B cell (primary cell): ENCODE measurements at regions of chr1 and their contacts with region 1.

Region 1: GRCh38 chr1:89762779-89763648 is 57.8 kb upstream of the LRRC8D start:
- DNase-seq: peak; percentile 90
- ATAC-seq: peak; percentile 99
- H3K4me3 ChIP-seq: peak overlapping the region; percentile 40 to 62 (median 59)
- H3K4me3 Mint-ChIP-seq: peak overlapping the region; percentile 87
- H3K27ac ChIP-seq: no peak overlapping the region
- H3K27ac Mint-ChIP-seq: peak overlapping the region; percentile 34
- H3K4me1 ChIP-seq: peaks cover 9 to 20% of the 10 kb centered on the region in 2 donors
- H3K4me1 Mint-ChIP-seq: peaks cover 25% of the 10 kb centered on the region
- H3K27me3 ChIP-seq: peaks cover 0 to 9% (median 0%) of the 10 kb centered on the region in 4 experiments
- H3K27me3 Mint-ChIP-seq: peaks cover 8% of the 10 kb centered on the region
- CTCF ChIP-seq: peak; percentile 98

Region 2: GRCh38 chr1:88998716-88999115 is 764.3 kb before region 1 on chr1:
- CTCF ChIA-PET with region 1: no interaction called
- POLR2A ChIA-PET with region 1: no interaction called
- intact Hi-C with region 1: loop called (anchors 5 kb)
- DNase-seq: peak; percentile 82
- ATAC-seq: peak; percentile 93
- H3K4me3 ChIP-seq: no peak overlapping the region
- H3K4me3 Mint-ChIP-seq: no peak overlapping the region
- H3K27ac ChIP-seq: no peak overlapping the region
- H3K27ac Mint-ChIP-seq: no peak overlapping the region
- H3K4me1 ChIP-seq: peaks cover 2 to 3% of the 10 kb centered on the region in 2 donors
- H3K4me1 Mint-ChIP-seq: peaks cover 2% of the 10 kb centered on the region
- H3K27me3 ChIP-seq: no peaks in the 10 kb centered on the region
- H3K27me3 Mint-ChIP-seq: no peaks in the 10 kb centered on the region
- CTCF ChIP-seq: peak; percentile 75

Region 3: GRCh38 chr1:89524369-89525168 is 238.4 kb before region 1 on chr1 and contains the start of gene LRRC8B:
- CTCF ChIA-PET with region 1: interaction called, 51 read pairs
- POLR2A ChIA-PET with region 1: no interaction called
- intact Hi-C with region 1: loop called (anchors 1 kb)
- DNase-seq: peak; percentile 94
- ATAC-seq: peak; percentile 81
- H3K4me3 ChIP-seq: peak within 1 kb of the TSS; percentile 58 to 99 (median 88)
- H3K4me3 Mint-ChIP-seq: peak within 1 kb of the TSS; percentile 98
- H3K27ac ChIP-seq: peak within 1 kb of the TSS; percentile 97 to 98
- H3K27ac Mint-ChIP-seq: peak within 1 kb of the TSS; percentile 97
- H3K4me1 ChIP-seq: peaks cover 13 to 23% of the 10 kb centered on the region in 2 donors
- H3K4me1 Mint-ChIP-seq: peaks cover 26% of the 10 kb centered on the region
- H3K27me3 ChIP-seq: no peaks in the 10 kb centered on the region
- H3K27me3 Mint-ChIP-seq: no peaks in the 10 kb centered on the region
- CTCF ChIP-seq: peak; percentile 6
- total RNA-seq, gene LRRC8B: 9.9 and 11.7 TPM in 2 replicates

Region 4: GRCh38 chr1:89615676-89616598 is 147.1 kb before region 1 on chr1:
- CTCF ChIA-PET with region 1: interaction called, 46 read pairs
- POLR2A ChIA-PET with region 1: no interaction called
- intact Hi-C with region 1: loop called (anchors 1 kb)
- DNase-seq: peak; percentile 52
- ATAC-seq: peak; percentile 77
- H3K4me3 ChIP-seq: no peak overlapping the region
- H3K4me3 Mint-ChIP-seq: no peak overlapping the region
- H3K27ac ChIP-seq: no peak overlapping the region
- H3K27ac Mint-ChIP-seq: no peak overlapping the region
- H3K4me1 ChIP-seq: peaks cover 10 to 11% of the 10 kb centered on the region in 2 donors
- H3K4me1 Mint-ChIP-seq: peaks cover 9% of the 10 kb centered on the region
- H3K27me3 ChIP-seq: no peaks in the 10 kb centered on the region
- H3K27me3 Mint-ChIP-seq: no peaks in the 10 kb centered on the region
- CTCF ChIP-seq: peak; percentile 51

Region 5: GRCh38 chr1:89657886-89658285 is 105.1 kb before region 1 on chr1:
- CTCF ChIA-PET with region 1: interaction called, 10 read pairs
- POLR2A ChIA-PET with region 1: interaction called, 5 read pairs
- intact Hi-C with region 1: no loop called
- DNase-seq: no peak
- ATAC-seq: no peak
- H3K4me3 ChIP-seq: no peak overlapping the region
- H3K4me3 Mint-ChIP-seq: no peak overlapping the region
- H3K27ac ChIP-seq: peak overlapping the region in 1 of 2 donors; percentile 27
- H3K27ac Mint-ChIP-seq: peak overlapping the region; percentile 29
- H3K4me1 ChIP-seq: peaks cover 26 to 27% of the 10 kb centered on the region in 2 donors
- H3K4me1 Mint-ChIP-seq: peaks cover 58% of the 10 kb centered on the region
- H3K27me3 ChIP-seq: no peaks in the 10 kb centered on the region
- H3K27me3 Mint-ChIP-seq: no peaks in the 10 kb centered on the region
- CTCF ChIP-seq: no peak

Region 6: DNA sequence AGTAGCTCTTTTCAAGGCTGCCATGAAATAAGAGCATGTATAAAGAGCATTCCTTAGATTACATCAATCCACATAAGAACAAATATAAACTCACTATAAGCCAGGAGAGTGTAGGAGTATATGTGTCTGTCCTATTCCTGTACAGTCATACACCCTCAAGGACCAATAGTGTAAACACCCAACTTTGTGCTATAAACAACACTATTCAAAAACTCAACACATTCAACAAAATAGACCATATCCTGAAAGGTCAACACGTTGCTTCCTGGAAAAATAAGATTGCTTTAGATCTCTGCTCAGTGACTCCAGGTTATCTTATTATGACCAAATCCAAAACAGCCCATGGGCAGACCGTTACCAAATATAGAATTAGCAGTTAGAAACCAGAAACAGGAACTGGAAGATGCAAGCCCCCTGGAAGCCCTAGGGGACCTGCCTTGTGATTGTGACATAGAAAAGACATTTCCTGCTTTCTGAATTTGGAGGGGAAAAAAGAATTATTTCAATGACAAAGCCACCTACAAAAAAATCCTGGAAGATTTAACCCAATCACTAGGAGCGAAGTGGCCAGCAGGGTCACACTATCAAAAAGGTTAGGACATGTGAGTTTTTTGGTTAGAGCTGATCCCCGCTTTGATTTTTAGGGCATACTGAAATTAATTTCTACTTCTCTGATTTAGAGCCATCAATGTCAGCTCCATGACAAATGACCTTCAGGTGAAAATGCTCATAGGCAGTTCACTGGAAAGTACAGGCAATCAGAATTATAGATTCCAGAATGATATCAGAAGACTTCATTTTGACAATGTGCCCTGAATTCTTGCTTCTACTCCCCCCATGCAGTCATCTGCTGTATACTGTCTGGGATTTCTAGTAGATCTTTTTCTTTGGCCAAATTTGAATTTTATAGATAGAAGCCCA is 70.2 kb before region 1 on chr1:
- CTCF ChIA-PET with region 1: interaction called, 29 read pairs
- POLR2A ChIA-PET with region 1: no interaction called
- intact Hi-C with region 1: loop called (anchors 5 kb)
- DNase-seq: peak; percentile 77
- ATAC-seq: peak; percentile 63
- H3K4me3 ChIP-seq: peak overlapping the region in 1 of 5 experiments; percentile 6
- H3K4me3 Mint-ChIP-seq: peak overlapping the region; percentile 35
- H3K27ac ChIP-seq: peak overlapping the region; percentile 68 to 93
- H3K27ac Mint-ChIP-seq: peak overlapping the region; percentile 42
- H3K4me1 ChIP-seq: peaks cover 37 to 48% of the 10 kb centered on the region in 2 donors
- H3K4me1 Mint-ChIP-seq: peaks cover 54% of the 10 kb centered on the region
- H3K27me3 ChIP-seq: no peaks in the 10 kb centered on the region
- H3K27me3 Mint-ChIP-seq: no peaks in the 10 kb centered on the region
- CTCF ChIP-seq: no peak

Region 7: DNA sequence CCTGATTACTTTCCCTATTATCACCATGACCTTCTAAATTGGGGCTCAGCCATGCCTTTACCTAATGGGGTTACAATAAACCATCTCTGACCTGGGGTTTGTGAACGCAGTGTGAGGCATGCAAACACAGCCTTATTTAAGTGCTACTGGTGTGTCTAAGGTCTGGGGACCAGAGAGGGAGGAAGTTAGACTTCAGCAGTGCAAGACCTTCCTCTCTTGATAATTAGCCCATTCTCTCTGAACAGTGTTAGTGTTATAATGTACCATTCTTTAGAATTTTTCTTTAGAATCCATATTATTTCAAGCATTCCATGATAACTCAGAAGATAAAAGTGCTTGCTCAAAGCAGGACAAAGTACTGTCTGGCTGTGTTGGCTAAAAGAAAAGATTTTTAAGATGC is 47.3 kb after region 1 on chr1:
- CTCF ChIA-PET with region 1: no interaction called
- POLR2A ChIA-PET with region 1: no interaction called
- intact Hi-C with region 1: no loop called
- DNase-seq: no peak
- ATAC-seq: no peak
- H3K4me3 ChIP-seq: no peak overlapping the region
- H3K4me3 Mint-ChIP-seq: no peak overlapping the region
- H3K27ac ChIP-seq: no peak overlapping the region
- H3K27ac Mint-ChIP-seq: no peak overlapping the region
- H3K4me1 ChIP-seq: peaks cover 5 to 7% of the 10 kb centered on the region in 2 donors
- H3K4me1 Mint-ChIP-seq: peaks cover 10% of the 10 kb centered on the region
- H3K27me3 ChIP-seq: peaks cover 0 to 3% (median 0%) of the 10 kb centered on the region in 4 experiments
- H3K27me3 Mint-ChIP-seq: no peaks in the 10 kb centered on the region
- CTCF ChIP-seq: no peak

Region 8: DNA sequence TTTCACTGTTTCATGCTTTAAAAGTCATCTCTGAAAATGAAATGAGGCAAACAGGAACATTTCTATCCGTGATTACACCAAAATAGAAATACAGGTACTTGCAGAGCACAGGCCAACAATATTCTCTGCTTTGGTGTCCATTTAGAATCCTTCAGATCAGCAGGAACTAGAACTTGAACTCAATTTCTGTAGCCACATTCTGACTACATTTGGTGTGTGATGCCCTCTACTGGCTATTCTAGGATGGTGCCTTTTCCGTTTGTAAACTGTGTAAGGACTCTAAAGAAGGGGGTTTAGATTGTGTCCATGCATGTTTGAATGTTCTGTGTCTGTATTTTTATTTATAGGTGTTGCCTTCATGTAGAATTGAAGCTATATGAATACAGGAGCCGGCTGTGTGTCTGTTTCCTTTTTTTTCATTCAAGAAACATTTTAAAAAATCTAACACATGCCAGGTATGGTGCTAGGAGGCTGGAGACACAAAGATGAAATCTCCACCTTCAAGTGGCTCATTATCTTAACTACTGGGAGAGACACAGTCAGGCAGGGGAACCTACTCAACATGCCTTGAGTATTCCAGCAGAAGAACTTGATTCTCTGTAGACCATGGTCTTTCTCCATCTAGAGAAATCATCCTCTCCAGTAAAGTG is 224.3 kb after region 1 on chr1:
- CTCF ChIA-PET with region 1: interaction called, 29 read pairs
- POLR2A ChIA-PET with region 1: no interaction called
- intact Hi-C with region 1: no loop called
- DNase-seq: peak; percentile 76
- ATAC-seq: peak; percentile 93
- H3K4me3 ChIP-seq: no peak overlapping the region
- H3K4me3 Mint-ChIP-seq: no peak overlapping the region
- H3K27ac ChIP-seq: no peak overlapping the region
- H3K27ac Mint-ChIP-seq: no peak overlapping the region
- H3K4me1 ChIP-seq: no peaks in the 10 kb centered on the region
- H3K4me1 Mint-ChIP-seq: no peaks in the 10 kb centered on the region
- H3K27me3 ChIP-seq: no peaks in the 10 kb centered on the region
- H3K27me3 Mint-ChIP-seq: no peaks in the 10 kb centered on the region
- CTCF ChIP-seq: peak; percentile 94